ENCODE measurements at regions of chr13 and their contacts with region 1.

Region 1: GRCh38 chr13:110561344-110562035 is at the start of gene RAB20:
- DNase-seq: peak; percentile 95 to 96
- ATAC-seq: peak; percentile 90
- H3K4me3 ChIP-seq: peak within 1 kb of the TSS; percentile 44 to 58
- H3K27ac ChIP-seq: peak within 1 kb of the TSS; percentile 8 to 100
- H3K4me1 ChIP-seq: no peaks in the 10 kb centered on the region
- H3K27me3 ChIP-seq: no peaks in the 10 kb centered on the region
- total RNA-seq, gene RAB20: 18.8 to 22.4 TPM

Region 2: GRCh38 chr13:110509971-110510786 is 51.3 kb before region 1 on chr13:
- intact Hi-C with region 1: loop called in 1 of 2 experiments (anchors 5 kb)
- DNase-seq: no peak
- ATAC-seq: no peak
- H3K4me3 ChIP-seq: no peak overlapping the region
- H3K27ac ChIP-seq: peak overlapping the region in 1 of 2 donors; percentile 3
- H3K4me1 ChIP-seq: peaks cover 0 to 1% of the 10 kb centered on the region in 2 donors
- H3K27me3 ChIP-seq: no peaks in the 10 kb centered on the region

Region 3: GRCh38 chr13:110520431-110521295 is 40.8 kb before region 1 on chr13:
- intact Hi-C with region 1: loop called (anchors 5 kb)
- DNase-seq: peak; percentile 92 to 94
- ATAC-seq: peak; percentile 80
- H3K4me3 ChIP-seq: no peak overlapping the region
- H3K27ac ChIP-seq: peak overlapping the region; percentile 74 to 97
- H3K4me1 ChIP-seq: peaks cover 0 to 2% of the 10 kb centered on the region in 2 donors
- H3K27me3 ChIP-seq: no peaks in the 10 kb centered on the region

Region 4: GRCh38 chr13:110615322-110616102 is 54.0 kb after region 1 on chr13 and contains the start of gene NAXD:
- intact Hi-C with region 1: loop called in 1 of 2 experiments (anchors 5 kb)
- DNase-seq: peak; percentile 96 to 98
- ATAC-seq: peak; percentile 95
- H3K4me3 ChIP-seq: peak within 1 kb of the TSS; percentile 49 to 64
- H3K27ac ChIP-seq: peak within 1 kb of the TSS; percentile 73 to 83
- H3K4me1 ChIP-seq: no peaks in the 10 kb centered on the region
- H3K27me3 ChIP-seq: no peaks in the 10 kb centered on the region
- total RNA-seq, gene NAXD: 21.2 to 30.4 TPM

Measured in aorta (tissue), 5 donors.